Mucosa of descending colon (tissue), 3 donors: ENCODE measurements at regions of chr3 and their contacts with region 1.

Region 1: GRCh38 chr3:85090495-85090894 is 131.7 kb downstream of the CADM2 start:
- DNase-seq: no peak
- ATAC-seq: no peak
- H3K4me3 ChIP-seq: no peak overlapping the region
- H3K4me1 ChIP-seq: no peaks in the 10 kb centered on the region
- CTCF ChIP-seq: no peak

Region 2: DNA sequence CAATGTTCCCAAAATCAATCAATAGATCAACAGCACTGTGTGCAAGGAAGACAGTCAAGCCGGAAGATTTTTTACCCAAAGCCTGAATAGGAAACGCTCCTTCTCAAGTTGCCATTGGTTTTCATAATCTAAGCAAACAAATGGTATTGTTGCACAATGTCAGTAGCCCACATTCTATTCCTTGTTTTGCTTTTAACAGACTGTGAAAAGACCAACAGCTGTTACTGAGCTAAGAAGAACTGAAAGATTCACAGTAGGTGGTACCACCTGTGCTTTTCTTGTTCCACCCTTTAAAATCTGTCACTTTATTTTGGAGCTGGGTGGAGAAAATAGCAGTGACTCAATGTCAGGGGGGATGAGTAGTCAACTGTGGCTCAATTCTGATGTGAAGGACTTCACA is 489.2 kb before region 1 on chr3:
- intact Hi-C with region 1: loop called in 1 of 2 experiments (anchors 5 kb)
- DNase-seq: no peak
- ATAC-seq: no peak
- H3K4me3 ChIP-seq: no peak overlapping the region
- H3K4me1 ChIP-seq: no peaks in the 10 kb centered on the region
- CTCF ChIP-seq: no peak

Region 3: GRCh38 chr3:84943379-84943778 is 147.1 kb before region 1 on chr3:
- intact Hi-C with region 1: no loop called
- DNase-seq: no peak
- ATAC-seq: no peak
- H3K4me3 ChIP-seq: no peak overlapping the region
- H3K4me1 ChIP-seq: no peaks in the 10 kb centered on the region
- CTCF ChIP-seq: no peak

Region 4: GRCh38 chr3:85455561-85456196 is 365.2 kb after region 1 on chr3:
- intact Hi-C with region 1: no loop called
- DNase-seq: no peak
- ATAC-seq: no peak
- H3K4me3 ChIP-seq: no peak overlapping the region
- H3K4me1 ChIP-seq: no peaks in the 10 kb centered on the region
- CTCF ChIP-seq: no peak